Ovary (tissue), 10 donors: ENCODE measurements at regions of chr19 and their contacts with region 1.

Region 1: DNA sequence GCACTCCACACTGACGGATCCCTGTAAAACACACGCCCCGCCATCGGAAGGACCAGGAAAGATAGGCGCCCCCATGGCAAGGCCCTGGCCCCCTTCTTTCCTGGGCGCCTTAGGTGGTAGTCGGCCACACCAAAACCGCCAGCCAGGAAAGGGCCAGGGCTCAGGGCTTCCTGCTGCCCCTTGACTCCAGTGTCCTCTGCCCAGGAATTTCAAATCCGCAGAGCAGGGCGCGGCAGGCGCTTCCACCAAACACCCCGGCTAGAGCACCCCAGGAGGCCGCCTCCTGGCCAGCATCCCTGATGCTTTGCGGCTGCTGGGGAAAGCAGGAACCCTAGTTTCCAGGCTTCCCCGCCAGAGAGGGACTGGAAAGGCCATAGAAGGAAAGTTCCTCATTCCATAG is 57.5 kb downstream of the ZNF726 start:
- DNase-seq: no peak
- H3K4me3 ChIP-seq: no peak overlapping the region
- H3K27ac ChIP-seq: no peak overlapping the region
- H3K4me1 ChIP-seq: no peaks in the 10 kb centered on the region
- H3K27me3 ChIP-seq: no peaks in the 10 kb centered on the region
- CTCF ChIP-seq: no peak
- EP300 ChIP-seq: no peak
- POLR2A ChIP-seq: no peak

Region 2: DNA sequence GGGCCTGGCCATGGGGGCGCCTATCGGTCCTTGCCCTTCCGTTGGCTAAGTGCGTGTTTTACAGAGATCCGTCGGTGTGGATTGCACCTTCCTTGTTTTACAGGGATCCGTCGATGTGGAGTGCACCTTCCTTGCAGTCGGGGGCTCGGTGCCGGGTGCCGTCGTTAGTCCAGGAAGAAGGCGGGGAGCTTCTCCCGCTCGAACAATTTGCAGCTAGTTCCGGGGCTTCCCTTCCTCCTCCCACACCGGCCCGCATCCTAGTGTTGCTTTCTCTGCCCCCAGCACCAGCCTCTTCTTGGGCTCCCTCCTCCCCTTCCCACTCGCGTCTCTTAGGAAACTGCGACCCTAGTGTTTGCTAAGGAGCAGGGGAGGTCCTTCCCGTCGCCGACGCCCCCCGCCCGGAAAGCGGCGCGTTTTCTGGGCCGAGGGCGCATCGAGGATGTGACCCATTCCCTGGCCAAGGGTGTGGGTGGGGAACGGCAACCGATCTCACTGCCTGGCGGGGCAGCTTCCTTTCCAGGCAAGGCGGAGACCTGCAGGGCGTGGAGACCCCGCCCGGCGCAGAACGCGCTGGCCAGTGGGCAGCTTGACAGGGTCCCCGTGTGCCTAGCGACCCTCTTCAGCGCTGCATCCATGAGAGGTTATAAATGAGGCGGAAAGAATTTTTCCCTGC is 501.2 kb before region 1 on chr19:
- intact Hi-C with region 1: loop called in 1 of 4 experiments (anchors 2 kb)
- DNase-seq: no peak
- H3K4me3 ChIP-seq: no peak overlapping the region
- H3K27ac ChIP-seq: no peak overlapping the region
- H3K4me1 ChIP-seq: no peaks in the 10 kb centered on the region
- H3K27me3 ChIP-seq: no peaks in the 10 kb centered on the region
- CTCF ChIP-seq: no peak
- EP300 ChIP-seq: no peak
- POLR2A ChIP-seq: no peak

Region 3: GRCh38 chr19:23855676-23856075 is 116.5 kb before region 1 on chr19:
- intact Hi-C with region 1: no loop called
- DNase-seq: no peak
- H3K4me3 ChIP-seq: no peak overlapping the region
- H3K27ac ChIP-seq: no peak overlapping the region
- H3K4me1 ChIP-seq: no peaks in the 10 kb centered on the region
- H3K27me3 ChIP-seq: no peaks in the 10 kb centered on the region
- CTCF ChIP-seq: no peak
- EP300 ChIP-seq: no peak
- POLR2A ChIP-seq: no peak

Region 4: GRCh38 chr19:23872282-23872919 is 99.8 kb before region 1 on chr19:
- intact Hi-C with region 1: loop called in 3 of 4 experiments (anchors 5 kb)
- DNase-seq: no peak
- H3K4me3 ChIP-seq: no peak overlapping the region
- H3K27ac ChIP-seq: no peak overlapping the region
- H3K4me1 ChIP-seq: no peaks in the 10 kb centered on the region
- H3K27me3 ChIP-seq: no peaks in the 10 kb centered on the region
- CTCF ChIP-seq: no peak
- EP300 ChIP-seq: no peak
- POLR2A ChIP-seq: no peak

Region 5: DNA sequence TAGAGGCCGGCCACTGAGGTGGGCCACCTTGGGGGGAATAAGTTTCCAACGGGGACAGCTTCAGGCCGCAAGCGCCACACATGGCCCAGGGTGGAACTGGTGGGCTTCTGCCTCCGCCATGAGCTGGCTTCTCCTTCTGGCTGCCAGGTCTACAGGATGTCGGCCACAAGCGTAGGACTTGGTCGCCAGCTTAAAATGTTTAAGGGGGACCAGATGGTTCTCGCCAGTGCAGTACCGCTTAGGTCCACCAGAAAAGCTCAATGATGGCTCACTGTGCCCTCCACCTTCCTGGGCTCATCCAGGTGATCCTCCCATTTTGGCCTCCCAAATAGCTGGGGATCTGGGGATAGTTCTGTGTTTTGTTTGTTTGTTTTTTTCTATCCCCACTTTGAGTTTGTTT is 76.1 kb after region 1 on chr19:
- intact Hi-C with region 1: no loop called
- DNase-seq: no peak
- H3K4me3 ChIP-seq: no peak overlapping the region
- H3K27ac ChIP-seq: no peak overlapping the region
- H3K4me1 ChIP-seq: no peaks in the 10 kb centered on the region
- H3K27me3 ChIP-seq: no peaks in the 10 kb centered on the region
- CTCF ChIP-seq: no peak
- EP300 ChIP-seq: no peak
- POLR2A ChIP-seq: no peak